SK-MEL-5 (cell line): ENCODE measurements at regions of chr1 and their contacts with region 1.

Region 1: GRCh38 chr1:37595440-37596319 is at the start of gene GNL2:
- DNase-seq: peak; percentile 94
- total RNA-seq, gene GNL2: 77.8 and 87.0 TPM in 2 replicates

Region 2: DNA sequence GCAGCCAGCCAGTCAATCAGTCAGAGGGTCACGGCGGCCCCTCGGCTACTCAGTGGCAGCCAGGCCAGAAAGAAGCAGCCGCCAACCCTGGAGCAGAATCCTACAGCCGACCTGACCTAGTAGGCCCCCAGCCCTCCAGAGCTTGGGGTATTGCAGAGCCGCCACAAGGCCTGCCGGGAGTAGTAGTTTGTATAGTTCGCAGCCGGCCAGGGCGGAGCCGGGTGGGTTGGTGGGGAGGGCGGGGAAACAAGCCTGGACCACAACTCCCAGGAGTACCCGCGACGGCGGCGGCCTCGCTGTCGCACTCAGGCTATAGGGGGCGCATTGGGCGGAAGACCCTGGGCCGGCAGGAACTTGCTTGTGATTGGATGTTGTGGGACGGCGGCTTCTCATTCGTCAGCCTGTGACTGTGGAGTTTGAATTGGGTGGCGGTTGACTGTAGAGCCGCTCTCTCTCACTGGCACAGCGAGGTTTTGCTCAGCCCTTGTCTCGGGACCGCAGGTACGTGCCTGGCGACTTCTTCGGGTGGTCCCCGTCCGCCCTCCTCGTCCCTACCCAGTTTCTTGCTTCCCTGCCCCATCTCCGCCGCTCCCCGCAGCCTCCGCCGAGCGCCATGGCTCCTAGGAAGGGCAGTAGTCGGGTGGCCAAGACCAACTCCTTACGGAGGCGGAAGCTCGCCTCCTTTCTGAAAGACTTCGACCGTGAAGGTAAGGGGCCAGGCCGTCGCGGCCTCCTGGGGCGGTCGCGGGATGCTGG is 96.6 kb after region 1 on chr1 and contains the start of gene CDCA8:
- in situ Hi-C with region 1: loop called (anchors 25 kb)
- DNase-seq: peak; percentile 96
- total RNA-seq, gene CDCA8: 3.3 and 4.8 TPM in 2 replicates

Region 3: DNA sequence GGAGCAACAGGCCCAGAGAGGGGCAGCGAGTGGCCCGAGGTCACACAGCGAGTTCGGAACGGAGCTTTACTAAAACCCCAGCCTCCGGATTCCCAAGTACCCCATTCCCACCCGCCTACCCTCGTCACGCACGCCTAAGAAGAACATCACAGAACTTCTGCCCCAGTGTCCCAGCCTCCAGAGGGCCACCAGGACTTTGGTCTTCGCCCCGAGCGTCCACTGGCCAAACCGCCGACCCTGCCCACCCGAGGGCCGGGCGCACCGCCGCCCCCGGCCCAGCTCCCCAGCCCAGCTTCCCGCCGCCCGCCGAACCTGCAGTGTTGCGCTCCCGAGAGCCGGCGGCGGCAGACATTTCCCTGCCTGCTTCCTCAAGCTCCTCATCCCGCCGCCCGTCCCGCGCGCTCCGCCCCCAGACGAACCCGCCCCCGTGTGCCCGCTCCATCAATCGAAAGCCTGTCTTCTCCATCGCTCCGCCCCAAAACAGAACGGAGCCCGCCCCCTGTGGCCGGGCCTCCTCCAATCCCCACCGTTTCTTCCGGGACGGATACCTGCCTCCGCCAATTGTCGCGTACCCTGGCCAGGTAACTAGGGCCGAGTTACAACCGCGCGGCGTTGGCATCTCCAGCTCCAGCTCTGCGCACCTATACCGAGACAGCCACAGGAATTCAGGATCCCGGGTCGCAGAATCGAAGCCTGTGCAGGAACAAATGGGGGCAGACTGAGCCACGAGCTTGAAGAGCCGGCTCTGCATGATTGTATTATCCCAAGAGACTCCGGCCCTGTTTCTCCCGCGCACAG is 335.9 kb after region 1 on chr1:
- in situ Hi-C with region 1: no loop called
- DNase-seq: peak; percentile 92